Ascending aorta (tissue), 2 donors: ENCODE measurements at regions of chr3 and their contacts with region 1.

Region 1: DNA sequence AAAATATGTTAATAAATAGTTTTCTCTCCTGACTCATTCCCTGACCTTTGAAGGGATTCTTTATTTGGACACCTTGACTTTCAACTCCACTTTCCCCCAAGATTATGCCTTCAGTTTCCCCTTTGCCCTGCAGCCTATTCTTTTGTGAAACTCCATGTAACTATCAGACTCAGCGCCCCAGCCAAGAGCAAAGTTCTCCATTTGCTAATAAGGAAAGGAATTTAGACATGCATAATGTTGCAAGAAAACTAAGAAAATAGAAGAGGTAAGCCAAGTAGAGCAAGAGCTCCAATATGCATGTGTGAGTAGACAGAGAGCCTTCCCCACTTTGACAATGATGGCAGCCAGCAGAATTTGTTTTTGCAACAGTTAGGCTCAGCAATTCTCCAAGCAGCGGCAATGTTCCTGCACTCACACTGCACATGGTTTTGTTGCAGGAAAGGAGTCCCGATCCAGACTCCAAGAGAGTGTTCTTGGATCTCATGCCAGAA is 61.2 kb downstream of the CD200 start:
- DNase-seq: peak in 1 of 2 donors; percentile 77
- H3K4me3 ChIP-seq: no peak overlapping the region
- H3K27ac ChIP-seq: peak overlapping the region; percentile 57 to 68
- H3K4me1 ChIP-seq: peaks cover 7 to 18% of the 10 kb centered on the region in 2 donors
- H3K27me3 ChIP-seq: no peaks in the 10 kb centered on the region
- CTCF ChIP-seq: no peak

Region 2: GRCh38 chr3:112092496-112093179 is 301.5 kb before region 1 on chr3:
- intact Hi-C with region 1: no loop called
- DNase-seq: no peak
- H3K4me3 ChIP-seq: peak overlapping the region in 1 of 2 donors; percentile 21
- H3K27ac ChIP-seq: peak overlapping the region in 1 of 2 donors; percentile 23
- H3K4me1 ChIP-seq: peaks cover 0 to 11% of the 10 kb centered on the region in 2 donors
- H3K27me3 ChIP-seq: no peaks in the 10 kb centered on the region
- CTCF ChIP-seq: no peak

Region 3: DNA sequence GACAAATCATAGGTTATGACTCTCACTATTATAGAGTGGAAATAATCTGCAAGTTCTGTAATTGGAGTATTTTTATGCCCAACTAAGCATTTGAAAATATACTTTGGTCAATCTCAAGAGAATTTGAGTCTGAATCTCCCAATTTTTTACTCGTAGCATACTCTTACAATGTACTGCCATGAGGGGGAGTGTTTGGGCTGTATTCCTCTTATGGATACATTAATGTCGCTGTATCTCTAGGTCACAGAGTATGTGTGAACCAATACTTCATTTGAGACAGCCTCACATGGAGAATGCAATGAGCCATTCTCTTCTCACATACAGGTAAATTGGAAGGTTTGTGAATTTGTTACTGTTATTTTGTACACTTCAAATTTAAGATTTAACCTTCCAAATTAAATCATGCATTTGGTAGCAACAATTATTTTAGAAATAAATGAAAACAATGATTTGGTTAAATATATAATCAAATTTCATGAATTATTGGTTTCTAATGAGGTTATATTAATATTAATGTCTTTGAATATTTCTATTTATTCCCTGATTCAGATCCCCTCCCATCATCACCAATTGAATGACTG is 66.7 kb before region 1 on chr3:
- intact Hi-C with region 1: loop called (anchors 1 kb)
- DNase-seq: no peak
- H3K4me3 ChIP-seq: no peak overlapping the region
- H3K27ac ChIP-seq: no peak overlapping the region
- H3K4me1 ChIP-seq: no peaks in the 10 kb centered on the region
- H3K27me3 ChIP-seq: no peaks in the 10 kb centered on the region
- CTCF ChIP-seq: peak; percentile 58 to 80 (median 80)

Region 4: DNA sequence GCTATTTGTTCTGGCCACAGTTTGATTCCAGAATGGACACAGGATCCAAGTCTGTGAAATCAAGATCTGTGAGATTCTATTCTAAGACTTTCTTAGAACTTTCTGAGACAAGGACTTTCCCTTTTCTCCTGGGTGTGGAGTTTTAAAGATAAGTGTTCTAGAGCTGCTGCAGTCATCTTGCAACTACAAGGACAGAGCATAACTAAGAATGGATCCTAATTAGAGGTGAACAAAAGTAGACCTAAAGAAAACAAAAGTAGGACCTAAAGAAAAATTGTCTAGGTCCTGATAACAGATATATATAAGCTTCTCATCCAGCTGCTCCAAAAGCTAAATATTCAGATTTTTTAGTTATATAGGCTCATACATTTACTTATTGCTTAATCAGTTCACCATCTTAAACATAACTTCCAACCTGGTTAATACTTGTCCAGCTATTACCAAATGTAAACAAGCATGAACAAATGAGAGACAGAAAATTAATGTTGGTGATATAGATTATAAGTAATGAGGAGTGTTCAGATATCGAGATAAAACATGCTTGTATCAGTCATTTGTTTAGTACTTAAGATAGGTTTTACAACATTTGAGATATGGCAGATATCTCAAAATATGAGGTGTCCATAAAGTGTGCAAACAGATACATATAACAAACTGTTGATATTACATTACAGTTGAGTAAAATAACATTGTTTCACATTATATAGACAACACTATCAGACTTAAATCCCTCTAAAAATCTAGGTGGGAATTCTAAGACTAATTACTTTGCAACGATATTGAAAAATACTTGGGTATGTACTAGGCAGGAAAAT is 13.9 kb after region 1 on chr3:
- intact Hi-C with region 1: loop called (anchors 2 kb)
- DNase-seq: no peak
- H3K4me3 ChIP-seq: no peak overlapping the region
- H3K27ac ChIP-seq: peak overlapping the region; percentile 72 to 75
- H3K4me1 ChIP-seq: peaks cover 4 to 24% of the 10 kb centered on the region in 2 donors
- H3K27me3 ChIP-seq: no peaks in the 10 kb centered on the region
- CTCF ChIP-seq: no peak